AG04449 (cell line): ENCODE measurements at regions of chr17 and their contacts with region 1.

Region 1: DNA sequence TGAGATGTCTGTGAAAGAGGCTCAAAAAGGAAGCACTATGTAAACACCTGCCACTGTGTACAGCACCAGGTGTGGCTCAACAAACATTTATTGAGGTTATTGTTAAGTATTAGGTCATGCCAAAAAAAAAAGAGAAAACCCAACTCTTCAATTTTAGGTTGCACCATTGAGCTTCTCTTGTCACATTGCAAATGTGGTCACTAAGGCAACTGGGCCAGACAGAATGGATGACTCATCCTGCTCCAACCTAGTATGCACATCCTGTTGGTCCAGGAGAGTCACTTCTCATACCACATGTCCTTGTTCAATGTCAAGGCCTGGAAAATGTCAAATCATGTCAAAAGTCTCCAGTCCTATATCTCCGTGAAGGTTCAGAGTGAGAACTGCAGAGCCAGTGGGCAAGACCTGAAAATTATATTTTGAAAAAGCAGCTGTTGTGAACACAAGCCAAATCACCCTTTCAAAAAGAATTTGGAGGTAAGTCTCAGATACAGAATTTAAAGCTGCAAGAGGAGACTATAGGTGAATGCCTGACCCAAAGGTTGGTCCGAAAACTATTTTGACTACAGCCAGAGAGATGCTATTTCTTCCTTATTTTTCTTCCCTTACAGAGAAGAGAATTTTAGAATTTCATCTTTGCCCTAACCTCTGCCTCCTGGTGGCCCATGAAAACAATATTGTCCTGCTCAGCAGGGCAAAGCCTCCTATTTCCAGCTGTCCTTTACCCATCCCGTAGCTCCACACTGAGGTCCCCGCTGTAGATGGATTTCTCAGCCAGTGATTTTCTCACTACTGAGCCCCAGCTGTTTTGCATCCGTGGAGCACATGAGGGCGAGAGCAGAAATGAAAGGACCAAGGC is 24.8 kb downstream of the HOXB1 start:
- DNase-seq: peak; percentile 58
- H3K4me3 ChIP-seq: no peak overlapping the region
- CTCF ChIP-seq: no peak

Region 2: DNA sequence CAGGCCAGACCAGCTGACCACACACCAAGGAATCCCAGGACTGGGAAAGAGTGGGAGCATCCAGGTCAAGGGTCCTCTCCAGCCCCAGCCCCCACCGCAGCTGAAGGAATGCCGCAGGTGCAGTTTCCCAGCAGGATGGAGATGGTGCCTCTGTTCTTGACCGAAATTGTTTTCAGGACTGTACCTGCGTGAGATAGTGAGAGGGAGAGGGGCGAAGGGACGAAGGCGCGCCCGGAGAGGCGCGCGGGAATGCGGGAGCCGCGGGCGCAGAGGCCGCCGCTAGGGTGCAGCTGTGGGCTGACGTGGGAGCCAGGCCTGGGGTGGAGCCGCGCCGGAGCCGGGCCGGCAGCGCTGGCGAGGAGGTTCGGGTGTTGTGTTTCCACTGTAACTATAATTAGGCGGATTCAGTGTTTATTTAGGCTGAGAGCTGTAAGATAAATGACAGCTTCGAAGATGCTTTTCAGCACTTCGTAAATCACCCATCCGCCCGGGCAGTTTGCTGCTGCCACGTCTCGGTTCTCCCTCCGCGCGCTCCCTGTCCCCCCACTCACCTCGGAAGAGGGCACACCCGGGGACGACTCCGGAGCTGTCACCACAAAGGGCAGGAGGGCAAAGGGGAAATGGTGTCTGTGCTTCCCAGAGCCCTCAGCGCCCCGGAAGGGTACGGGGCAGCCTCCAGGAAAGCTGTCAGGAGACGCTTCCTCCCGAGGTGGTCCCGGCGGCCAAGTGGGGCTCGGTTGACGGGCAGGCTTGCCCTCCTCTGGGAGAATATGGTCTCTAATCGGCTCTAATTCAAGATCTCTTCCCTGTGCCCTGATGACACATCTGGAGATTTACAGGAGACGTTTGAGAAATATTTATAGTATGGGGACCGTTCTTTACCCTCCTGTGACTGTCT is 13.4 kb before region 1 on chr17:
- CTCF ChIA-PET with region 1: interaction called, 33 read pairs
- POLR2A ChIA-PET with region 1: no interaction called
- DNase-seq: no peak
- H3K4me3 ChIP-seq: peak overlapping the region; percentile 45
- CTCF ChIP-seq: peak; percentile 90

Region 3: GRCh38 chr17:48522031-48522653 is 16.1 kb after region 1 on chr17:
- CTCF ChIA-PET with region 1: interaction called, 34 read pairs
- POLR2A ChIA-PET with region 1: interaction called, 3 read pairs
- DNase-seq: no peak
- H3K4me3 ChIP-seq: no peak overlapping the region
- CTCF ChIP-seq: no peak